ENCODE measurements at regions of chr1 and their contacts with region 1.

Region 1: GRCh38 chr1:36950604-36951291 is 83.6 kb downstream of the GRIK3 start:
- DNase-seq: peak; percentile 97
- H3K4me3 ChIP-seq: peak overlapping the region; percentile 44
- H3K27ac ChIP-seq: peak overlapping the region; percentile 99
- H3K4me1 ChIP-seq: peaks cover 99% of the 10 kb centered on the region
- CTCF ChIP-seq: no peak

Region 2: DNA sequence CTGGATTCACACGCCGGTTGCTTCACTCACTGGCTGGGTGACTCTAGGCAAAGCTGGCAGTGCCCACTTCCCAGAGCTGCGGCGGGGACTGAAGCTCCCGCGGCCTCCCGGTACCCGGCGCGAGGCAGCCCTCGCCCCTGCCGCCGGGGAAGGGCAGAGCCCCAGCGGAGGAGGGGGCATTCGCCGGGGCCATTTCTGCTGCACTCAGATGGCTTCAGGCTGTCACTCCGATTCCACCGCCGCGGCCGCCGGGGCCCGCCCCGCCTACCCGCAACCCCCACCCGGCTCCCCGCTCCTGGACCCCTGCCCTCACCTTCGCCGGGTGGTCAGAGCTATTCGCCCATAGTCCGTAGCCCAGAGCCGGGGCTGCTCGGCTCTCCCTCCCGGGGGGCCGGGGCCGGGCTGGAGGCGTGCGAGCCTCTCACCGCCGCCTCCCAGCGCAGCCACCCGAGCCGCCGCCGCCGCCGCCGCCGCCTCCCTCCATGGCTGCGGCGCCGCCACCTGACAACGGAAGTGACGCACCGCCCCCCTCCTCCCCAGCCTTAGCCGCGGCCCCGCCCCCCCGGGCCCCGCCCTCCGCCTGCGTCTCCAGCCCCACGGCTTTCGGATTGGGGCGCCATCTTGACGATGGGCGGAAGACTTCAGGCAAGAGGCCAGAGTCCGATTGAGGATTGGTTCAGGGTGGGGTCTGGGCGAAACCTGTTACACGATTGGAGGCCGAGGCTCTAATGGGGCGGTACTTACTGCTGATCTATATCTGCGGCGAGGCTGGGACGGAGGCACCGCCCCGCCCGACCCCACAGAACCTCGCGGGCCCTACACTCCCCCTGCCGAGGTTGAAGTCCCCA is 565.1 kb before region 1 on chr1 and contains the start of gene STK40:
- CTCF ChIA-PET with region 1: no interaction called
- POLR2A ChIA-PET with region 1: interaction called, 3 read pairs
- intact Hi-C with region 1: loop called (anchors 5 kb)
- DNase-seq: peak; percentile 100
- H3K4me3 ChIP-seq: peak within 1 kb of the TSS; percentile 96
- H3K27ac ChIP-seq: peak within 1 kb of the TSS; percentile 98
- H3K4me1 ChIP-seq: peaks cover 59% of the 10 kb centered on the region
- CTCF ChIP-seq: no peak
- total RNA-seq, gene STK40: 41.9 and 43.8 TPM in 2 replicates

Region 3: DNA sequence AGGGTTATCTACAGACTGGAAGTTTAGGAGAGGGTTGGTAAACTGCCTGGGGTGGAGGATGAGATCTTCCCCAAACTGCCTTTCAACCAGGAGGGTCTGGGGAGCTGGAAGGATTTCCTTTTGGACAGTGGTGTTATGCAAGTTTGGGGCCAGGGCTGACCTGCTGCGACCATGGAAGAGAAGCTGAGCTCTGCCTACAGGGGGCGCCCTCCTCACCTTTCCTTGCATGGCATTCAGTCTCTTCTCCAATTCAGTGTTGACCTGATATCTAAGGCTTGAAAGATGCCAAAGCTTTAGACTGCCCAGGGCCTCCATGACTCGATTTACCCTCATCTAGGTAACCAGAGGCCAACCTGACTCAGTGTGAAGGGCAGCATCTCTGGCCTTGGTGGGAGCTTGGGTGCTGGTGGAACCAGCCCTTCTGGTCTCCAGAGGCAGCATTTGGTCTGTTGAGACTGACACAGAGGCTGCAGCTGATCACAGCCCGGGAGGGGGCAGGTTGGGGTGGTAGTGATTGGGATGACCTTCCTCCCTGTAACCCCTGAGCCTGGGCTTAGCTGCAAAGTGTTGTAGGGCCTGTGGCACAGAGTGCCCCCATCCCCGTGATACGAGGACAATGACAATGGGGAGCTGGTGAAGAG is 86.4 kb before region 1 on chr1:
- CTCF ChIA-PET with region 1: interaction called, 3 read pairs
- POLR2A ChIA-PET with region 1: interaction called, 4 read pairs
- intact Hi-C with region 1: loop called (anchors 1 kb)
- DNase-seq: peak; percentile 66
- H3K4me3 ChIP-seq: no peak overlapping the region
- H3K27ac ChIP-seq: no peak overlapping the region
- H3K4me1 ChIP-seq: peaks cover 38% of the 10 kb centered on the region
- CTCF ChIP-seq: peak; percentile 95

Region 4: GRCh38 chr1:36885538-36886357 is 65.0 kb before region 1 on chr1:
- CTCF ChIA-PET with region 1: no interaction called
- POLR2A ChIA-PET with region 1: interaction called, 3 read pairs
- intact Hi-C with region 1: loop called (anchors 1 kb)
- DNase-seq: no peak
- H3K4me3 ChIP-seq: peak overlapping the region; percentile 37
- H3K27ac ChIP-seq: peak overlapping the region; percentile 92
- H3K4me1 ChIP-seq: peaks cover 75% of the 10 kb centered on the region
- CTCF ChIP-seq: peak; percentile 39; the same call in 1 of the 2 replicates

Region 5: GRCh38 chr1:36981771-36982622 is 31.2 kb after region 1 on chr1:
- CTCF ChIA-PET with region 1: no interaction called
- POLR2A ChIA-PET with region 1: no interaction called
- intact Hi-C with region 1: no loop called
- DNase-seq: no peak
- H3K4me3 ChIP-seq: no peak overlapping the region
- H3K27ac ChIP-seq: no peak overlapping the region
- H3K4me1 ChIP-seq: peaks cover 8% of the 10 kb centered on the region
- CTCF ChIP-seq: no peak

Region 6: GRCh38 chr1:37071829-37072228 is 121.1 kb after region 1 on chr1:
- CTCF ChIA-PET with region 1: no interaction called
- POLR2A ChIA-PET with region 1: no interaction called
- intact Hi-C with region 1: no loop called
- DNase-seq: no peak
- H3K4me3 ChIP-seq: no peak overlapping the region
- H3K27ac ChIP-seq: no peak overlapping the region
- H3K4me1 ChIP-seq: no peaks in the 10 kb centered on the region
- CTCF ChIP-seq: no peak

Region 7: GRCh38 chr1:38064232-38064903 is 1113.6 kb after region 1 on chr1:
- CTCF ChIA-PET with region 1: no interaction called
- POLR2A ChIA-PET with region 1: no interaction called
- intact Hi-C with region 1: no loop called
- DNase-seq: no peak
- H3K4me3 ChIP-seq: no peak overlapping the region
- H3K27ac ChIP-seq: no peak overlapping the region
- H3K4me1 ChIP-seq: peaks cover 3% of the 10 kb centered on the region
- CTCF ChIP-seq: no peak

Measured in OCI-LY7 (cell line).